Common myeloid progenitor, CD34-positive (primary cell): ENCODE measurements at regions of chrX and their contacts with region 1.

Region 1: DNA sequence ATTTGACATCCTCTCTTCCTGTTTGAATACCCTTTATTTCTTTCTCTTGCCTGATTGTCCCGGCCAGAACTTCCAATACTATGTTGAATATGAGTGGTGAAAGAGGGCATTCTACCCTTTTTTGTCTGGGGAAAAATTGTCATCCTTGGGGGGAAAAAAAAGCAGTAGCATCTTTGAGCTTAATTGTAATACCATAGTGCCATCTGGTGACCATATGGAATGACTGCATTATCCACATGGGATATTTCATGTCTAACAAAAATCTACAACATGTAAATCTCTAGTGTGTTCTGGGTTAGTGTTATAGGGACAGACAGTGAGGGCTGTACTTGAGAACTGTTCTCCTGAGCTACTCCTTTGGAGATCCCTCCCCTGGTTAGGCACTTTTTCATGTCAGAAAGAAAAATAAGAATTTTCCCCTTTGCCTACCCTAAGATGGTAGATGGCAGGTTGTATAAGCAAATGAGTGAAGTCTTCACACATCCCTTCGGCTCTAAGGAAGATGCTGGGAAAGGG is 26.0 kb downstream of the CAPN6 start:
- DNase-seq: peak; percentile 5 to 39 (median 31)
- H3K4me3 ChIP-seq: no peak overlapping the region
- H3K27ac ChIP-seq: no peak overlapping the region
- H3K4me1 ChIP-seq: no peaks in the 10 kb centered on the region
- H3K27me3 ChIP-seq: peaks cover 0 to 8% (median 0%) of the 10 kb centered on the region in 5 experiments

Region 2: DNA sequence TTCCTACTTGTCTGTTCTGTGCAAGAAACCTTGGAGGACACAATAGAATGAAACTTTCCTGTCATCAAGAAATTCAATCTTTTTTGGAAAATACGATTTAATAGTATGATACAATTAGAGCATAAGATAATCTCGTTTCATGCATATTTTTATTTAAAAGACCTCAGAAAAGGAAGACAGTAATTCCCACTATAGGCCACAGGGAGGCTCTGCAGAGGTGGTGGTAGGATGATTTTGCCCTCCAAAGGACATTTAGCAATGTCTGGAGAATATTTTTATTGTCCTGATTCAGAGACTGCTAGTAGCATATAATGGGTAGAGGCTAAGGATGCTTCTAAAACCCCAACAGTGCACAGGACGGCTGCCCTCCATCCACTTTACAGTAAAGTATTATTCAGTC is 79.6 kb before region 1 on chrX:
- CTCF ChIA-PET with region 1: interaction called, 30 read pairs
- POLR2A ChIA-PET with region 1: no interaction called
- DNase-seq: peak in 2 of 3 donors; percentile 35 to 48
- H3K4me3 ChIP-seq: no peak overlapping the region
- H3K27ac ChIP-seq: no peak overlapping the region
- H3K4me1 ChIP-seq: peaks cover 0 to 6% (median 3%) of the 10 kb centered on the region in 4 experiments
- H3K27me3 ChIP-seq: peaks cover 0 to 3% (median 0%) of the 10 kb centered on the region in 5 experiments